ENCODE measurements at regions of chr4 and their contacts with region 1.

Region 1: DNA sequence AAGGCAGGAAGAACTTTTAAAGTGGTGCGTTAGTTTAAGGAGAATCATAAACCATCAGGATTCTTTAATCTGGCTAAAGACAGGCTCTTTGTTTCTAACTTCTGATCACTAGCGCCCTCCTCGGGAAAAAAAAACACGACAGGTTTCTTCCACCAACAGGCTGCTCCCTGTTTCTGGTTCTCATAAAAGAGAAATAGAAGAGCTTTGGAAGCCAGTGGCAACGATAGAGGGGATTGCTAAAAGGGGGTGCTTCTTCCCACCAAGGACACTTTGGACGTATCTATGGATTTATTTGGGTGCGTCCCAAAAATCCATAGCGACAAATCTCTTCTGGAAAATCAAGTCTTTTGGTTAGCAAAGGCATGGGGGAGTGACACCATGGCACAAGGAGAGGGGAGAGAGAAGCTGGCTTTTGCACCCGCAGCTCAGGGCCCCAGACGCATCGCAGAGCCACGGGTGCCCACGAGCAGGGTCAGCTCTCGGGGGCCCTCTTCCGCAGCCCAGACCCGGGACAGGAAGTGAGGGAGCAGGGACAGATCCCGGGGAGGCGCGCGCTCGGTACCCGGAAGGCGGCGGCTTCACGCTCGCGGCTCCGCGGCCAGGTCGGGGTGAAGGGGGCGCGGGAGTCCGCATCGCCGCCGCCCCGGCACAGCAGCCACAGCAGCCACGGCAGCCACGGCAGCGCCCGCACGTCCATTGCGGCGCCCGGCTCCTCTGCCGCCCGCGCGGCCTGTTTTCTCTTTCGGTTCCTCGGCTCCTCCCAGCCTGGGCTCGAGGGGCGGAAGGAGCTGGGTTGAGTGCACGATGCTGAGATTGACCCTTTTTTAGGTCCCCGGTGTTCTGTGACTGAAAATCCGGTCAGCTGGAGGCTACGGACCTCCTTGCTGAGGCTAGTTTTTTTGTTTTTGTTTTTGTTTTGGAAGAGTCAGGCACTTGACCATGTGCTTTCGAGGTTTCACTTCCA is at the start of gene CTSO:
- DNase-seq: peak; percentile 93
- H3K4me3 Mint-ChIP-seq: peak within 1 kb of the TSS; percentile 99
- H3K27ac Mint-ChIP-seq: peak within 1 kb of the TSS; percentile 99
- H3K4me1 Mint-ChIP-seq: peaks cover 11% of the 10 kb centered on the region
- H3K27me3 Mint-ChIP-seq: no peaks in the 10 kb centered on the region
- total RNA-seq, gene CTSO: 0.93 and 1.1 TPM in 2 replicates

Region 2: DNA sequence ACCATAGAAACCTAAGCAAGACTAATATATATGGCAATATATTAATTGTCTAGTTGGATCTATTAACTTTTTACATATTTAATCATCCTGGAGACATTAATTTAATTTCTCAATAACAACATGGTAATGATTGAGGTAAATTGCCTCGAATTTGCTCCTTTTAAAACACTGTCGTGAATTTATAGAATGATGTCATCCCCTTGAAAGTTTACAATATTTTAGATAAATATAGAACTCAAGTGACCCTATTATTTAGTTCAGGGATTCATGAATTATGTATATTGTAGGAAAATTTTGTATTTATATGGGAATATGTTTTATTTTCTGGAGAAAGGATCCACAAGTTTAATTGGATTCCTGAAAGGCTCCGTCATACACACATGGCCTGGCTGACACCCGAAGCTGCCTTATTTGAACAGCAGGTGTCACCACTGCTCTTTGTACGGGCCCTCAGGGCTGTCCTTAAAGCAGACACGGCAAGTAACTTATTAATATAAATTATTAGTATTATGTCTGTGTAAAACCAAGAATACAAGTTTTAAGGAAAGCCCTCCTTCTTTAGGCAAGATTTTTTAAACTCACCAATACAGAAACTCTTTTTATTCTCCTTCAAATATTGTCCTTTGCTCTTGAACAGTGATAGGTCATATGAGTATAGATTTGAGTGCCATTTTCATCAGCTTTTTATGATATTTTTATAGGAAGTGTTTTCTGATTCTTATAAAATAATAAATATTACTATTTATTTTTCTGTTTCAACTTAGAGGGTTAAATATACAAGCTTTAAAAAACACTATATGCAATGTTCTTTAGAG is 1401.4 kb before region 1 on chr4:
- intact Hi-C with region 1: loop called (anchors 5 kb)
- DNase-seq: peak; percentile 90
- H3K4me3 Mint-ChIP-seq: no peak overlapping the region
- H3K27ac Mint-ChIP-seq: no peak overlapping the region
- H3K4me1 Mint-ChIP-seq: peaks cover 16% of the 10 kb centered on the region
- H3K27me3 Mint-ChIP-seq: peaks cover 4% of the 10 kb centered on the region

Region 3: DNA sequence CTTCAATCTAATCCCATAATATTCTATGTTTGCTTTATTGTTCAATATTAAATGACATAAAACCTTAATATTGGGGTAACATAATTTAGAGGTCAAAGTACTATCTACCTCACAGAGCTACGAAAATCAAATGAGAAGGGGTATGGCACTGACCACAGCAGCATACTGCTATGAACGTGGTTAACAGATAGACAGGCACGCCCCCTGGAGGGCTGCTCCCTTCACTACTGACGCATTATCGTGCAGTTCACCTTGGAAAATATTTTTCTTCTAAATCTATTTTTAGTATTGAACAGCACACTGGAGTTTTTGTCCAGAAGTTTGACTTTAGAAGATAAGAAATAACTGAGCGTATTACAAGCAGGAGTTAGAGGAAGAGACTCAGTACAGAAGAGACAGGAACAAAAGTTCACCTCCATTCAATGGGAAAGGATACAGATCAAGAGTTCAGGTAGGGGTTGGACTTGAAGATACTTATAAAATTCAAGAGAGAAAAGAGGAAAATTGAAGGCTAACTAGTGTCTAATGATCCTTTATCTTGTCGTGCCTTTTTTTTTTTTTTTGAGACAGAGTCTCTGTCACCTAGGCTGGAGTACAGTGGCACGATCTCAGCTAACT is 599.4 kb before region 1 on chr4:
- intact Hi-C with region 1: no loop called
- DNase-seq: peak; percentile 77
- H3K4me3 Mint-ChIP-seq: no peak overlapping the region
- H3K27ac Mint-ChIP-seq: no peak overlapping the region
- H3K4me1 Mint-ChIP-seq: peaks cover 1% of the 10 kb centered on the region
- H3K27me3 Mint-ChIP-seq: no peaks in the 10 kb centered on the region

Region 4: GRCh38 chr4:155376387-155377268 is 576.8 kb before region 1 on chr4 and contains the start of gene MAP9:
- intact Hi-C with region 1: loop called (anchors 5 kb)
- DNase-seq: peak; percentile 95
- H3K4me3 Mint-ChIP-seq: peak within 1 kb of the TSS; percentile 84
- H3K27ac Mint-ChIP-seq: peak within 1 kb of the TSS; percentile 76
- H3K4me1 Mint-ChIP-seq: peaks cover 12% of the 10 kb centered on the region
- H3K27me3 Mint-ChIP-seq: peaks cover 6% of the 10 kb centered on the region
- total RNA-seq, gene MAP9: 6.1 and 6.9 TPM in 2 replicates

Region 5: GRCh38 chr4:155442267-155443105 is 510.9 kb before region 1 on chr4:
- intact Hi-C with region 1: loop called (anchors 1 kb)
- DNase-seq: peak; percentile 87
- H3K4me3 Mint-ChIP-seq: no peak overlapping the region
- H3K27ac Mint-ChIP-seq: no peak overlapping the region
- H3K4me1 Mint-ChIP-seq: peaks cover 3% of the 10 kb centered on the region
- H3K27me3 Mint-ChIP-seq: peaks cover 15% of the 10 kb centered on the region

Region 6: GRCh38 chr4:155809835-155810234 is 143.6 kb before region 1 on chr4:
- intact Hi-C with region 1: loop called (anchors 1 kb)
- DNase-seq: peak; percentile 71
- H3K4me3 Mint-ChIP-seq: no peak overlapping the region
- H3K27ac Mint-ChIP-seq: no peak overlapping the region
- H3K4me1 Mint-ChIP-seq: no peaks in the 10 kb centered on the region
- H3K27me3 Mint-ChIP-seq: peaks cover 2% of the 10 kb centered on the region

Measured in activated CD4-positive, alpha-beta T cell treated with anti-CD3 and anti-CD28 coated beads, Interleukin-2, amount 10 ng/mL, durations not matched to agents 24 days and 14 days (primary cell).